ENCODE measurements at regions of chr11 and their contacts with region 1.

Region 1: DNA sequence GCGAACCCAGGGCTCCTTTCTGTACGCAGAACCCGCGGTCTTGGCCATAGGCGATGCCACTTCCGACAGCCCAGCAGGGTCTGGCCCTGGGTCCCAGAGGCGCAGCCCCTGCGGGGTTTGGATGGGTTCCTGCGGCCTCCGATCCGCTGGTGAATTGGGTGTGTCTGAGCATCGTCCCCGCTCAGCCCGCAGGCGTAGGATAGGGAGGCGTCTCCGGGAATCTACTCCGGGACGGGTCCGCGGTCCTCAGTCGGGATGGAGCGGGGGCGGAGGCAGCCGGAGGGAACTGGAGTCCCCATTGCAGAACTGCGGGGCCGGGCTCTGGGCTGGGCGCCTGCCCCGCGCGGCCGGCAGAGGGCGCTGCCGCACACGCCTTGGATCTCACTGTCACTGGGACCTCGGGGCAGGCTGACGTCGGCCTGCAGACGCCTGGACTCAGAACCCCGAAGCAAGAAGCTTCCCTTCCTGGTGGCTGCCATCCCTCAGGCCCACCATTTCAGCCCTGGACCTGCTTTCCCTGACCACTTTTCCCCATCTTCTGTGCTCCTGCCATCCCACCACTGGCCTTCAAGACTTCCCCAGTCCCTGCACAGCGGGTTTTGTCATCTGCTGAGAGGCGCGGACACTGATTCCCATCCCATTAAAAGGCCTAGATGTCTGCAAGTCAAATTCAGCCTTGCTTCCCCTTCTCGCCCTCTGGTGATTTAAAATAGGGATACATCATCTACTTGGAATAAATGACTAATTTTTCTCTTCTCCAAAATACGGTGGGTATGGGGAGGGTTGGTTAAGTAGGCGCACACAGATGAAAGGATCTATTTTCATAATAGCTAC is 38.3 kb upstream of the CREB3L1 start:
- DNase-seq: peak; percentile 71 to 92 (median 82)
- H3K4me3 ChIP-seq: peak overlapping the region in 58 of 59 donors; percentile 35 to 75 (median 59)
- H3K27ac ChIP-seq: peak overlapping the region in 56 of 59 donors; percentile 12 to 91 (median 80)
- H3K27me3 ChIP-seq: peaks cover 0 to 14% (median 0%) of the 10 kb centered on the region in 45 donors
- CTCF ChIP-seq: peak; percentile 84 to 100 (median 99)

Region 2: GRCh38 chr11:46121724-46122477 is 117.3 kb before region 1 on chr11:
- intact Hi-C with region 1: loop called (anchors 1 to 2 kb)
- DNase-seq: peak; percentile 55 to 79 (median 71)
- H3K4me3 ChIP-seq: peak overlapping the region; percentile 59 to 89 (median 76)
- H3K27ac ChIP-seq: peak overlapping the region; percentile 79 to 99 (median 94)
- H3K27me3 ChIP-seq: no peaks in the 10 kb centered on the region
- CTCF ChIP-seq: peak in 4 of 56 donors; percentile 5 to 19 (median 15)

Region 3: GRCh38 chr11:46278387-46279125 is 39.4 kb after region 1 on chr11:
- intact Hi-C with region 1: no loop called
- DNase-seq: peak in 3 of 10 donors; percentile 31 to 54 (median 46)
- H3K4me3 ChIP-seq: peak overlapping the region in 57 of 59 donors; percentile 14 to 69 (median 51)
- H3K27ac ChIP-seq: peak overlapping the region in 3 of 59 donors; percentile 10 to 58 (median 58)
- H3K27me3 ChIP-seq: peaks cover 0 to 78% (median 27%) of the 10 kb centered on the region in 45 donors
- CTCF ChIP-seq: peak in 41 of 56 donors; percentile 14 to 53 (median 33)

Region 4: DNA sequence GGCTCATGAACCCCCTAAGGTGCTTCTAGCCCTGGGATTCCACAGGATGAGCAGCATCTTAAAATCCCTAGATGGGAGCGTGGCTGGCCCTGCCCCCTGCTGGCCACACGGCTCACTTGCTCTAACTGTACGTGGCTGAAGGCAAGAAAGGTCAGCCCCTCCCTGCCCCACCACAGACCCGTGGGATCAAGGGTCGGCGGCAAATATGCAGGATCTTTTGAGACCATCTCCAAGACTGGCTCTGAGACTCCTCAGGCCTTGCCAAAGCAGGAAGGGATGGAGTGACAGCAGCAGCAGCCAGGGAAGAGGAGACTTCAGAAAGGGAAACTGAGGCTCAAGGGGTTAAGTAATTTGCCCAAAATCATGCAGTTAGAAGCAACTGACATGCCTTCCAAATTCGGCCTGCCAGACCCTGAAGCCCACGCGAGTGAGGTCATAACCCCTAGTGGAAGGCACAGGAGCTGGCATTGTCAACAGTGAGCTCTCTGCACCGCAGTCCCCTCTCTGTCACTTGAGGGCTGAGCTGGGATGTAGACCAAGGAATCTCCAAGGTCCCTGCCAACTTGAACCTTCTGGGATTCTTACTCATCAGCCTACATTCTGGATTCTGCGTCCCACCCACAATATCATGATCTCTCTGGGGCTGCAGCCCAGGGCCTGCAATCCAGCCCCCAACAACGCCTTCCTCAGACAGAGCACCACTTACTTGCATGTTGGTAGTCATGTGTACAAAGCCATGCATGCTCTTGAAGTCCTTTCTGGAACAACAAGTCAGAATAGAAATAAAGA is 69.6 kb after region 1 on chr11:
- intact Hi-C with region 1: loop called (anchors 1 to 2 kb)
- DNase-seq: peak; percentile 34 to 87 (median 78)
- H3K4me3 ChIP-seq: no peak overlapping the region
- H3K27ac ChIP-seq: no peak overlapping the region
- H3K27me3 ChIP-seq: no peaks in the 10 kb centered on the region
- CTCF ChIP-seq: peak; percentile 52 to 94 (median 87)

Region 5: GRCh38 chr11:46346886-46347636 is 107.9 kb after region 1 on chr11 and contains the start of gene DGKZ:
- intact Hi-C with region 1: loop called in 1 of 2 experiments (anchors 5 kb)
- DNase-seq: peak; percentile 78 to 95 (median 88)
- H3K4me3 ChIP-seq: peak within 1 kb of the TSS; percentile 42 to 90 (median 79)
- H3K27ac ChIP-seq: peak within 1 kb of the TSS in 56 of 59 donors; percentile 15 to 91 (median 82)
- H3K27me3 ChIP-seq: no peaks in the 10 kb centered on the region
- CTCF ChIP-seq: peak; percentile 31 to 92 (median 71)
- total RNA-seq, gene DGKZ: 142 to 475 (median 319) TPM

Region 6: GRCh38 chr11:46367244-46367915 is 128.2 kb after region 1 on chr11:
- intact Hi-C with region 1: loop called in 1 of 2 experiments (anchors 5 kb)
- DNase-seq: peak in 9 of 10 donors; percentile 61 to 87 (median 77)
- H3K4me3 ChIP-seq: peak overlapping the region in 26 of 59 donors; percentile 1 to 65 (median 22)
- H3K27ac ChIP-seq: peak overlapping the region in 58 of 59 donors; percentile 20 to 99 (median 96)
- H3K27me3 ChIP-seq: no peaks in the 10 kb centered on the region
- CTCF ChIP-seq: peak; percentile 84 to 99 (median 96)

Region 7: DNA sequence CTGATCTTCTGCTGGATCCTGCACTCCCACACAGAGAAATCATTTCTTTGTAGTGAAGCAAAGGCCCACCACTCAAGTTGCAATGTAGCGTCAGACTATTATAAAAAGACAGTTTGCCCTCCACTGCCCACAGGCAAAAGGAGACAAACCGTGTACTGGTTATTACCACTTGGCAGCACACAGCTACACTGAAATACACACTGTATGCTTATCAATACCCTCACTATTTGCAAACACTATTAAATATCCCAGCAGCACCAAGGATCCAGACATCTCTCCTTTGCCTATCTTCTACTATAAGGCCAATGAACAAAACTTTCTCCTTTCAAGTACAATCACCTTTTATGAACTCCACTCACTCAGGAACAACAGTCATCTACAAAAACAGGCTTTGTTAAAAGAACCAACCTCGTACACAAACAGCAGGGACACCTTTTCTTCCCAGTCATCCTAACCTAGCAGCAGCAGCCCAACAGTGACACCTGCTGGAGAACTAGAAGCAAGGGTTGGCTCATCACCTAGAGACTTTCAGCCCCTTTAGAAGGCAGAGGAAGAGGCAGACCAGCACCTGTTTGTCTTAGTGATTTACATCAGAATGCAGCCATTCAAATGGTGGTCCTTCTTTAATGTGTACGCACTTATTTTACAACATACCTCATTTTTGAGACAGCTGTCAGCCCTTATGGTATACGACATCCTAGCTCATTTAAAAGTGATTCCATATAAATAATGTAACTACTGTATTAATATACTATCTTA is 298.5 kb after region 1 on chr11:
- intact Hi-C with region 1: loop called in 1 of 2 experiments (anchors 10 kb)
- DNase-seq: peak in 8 of 10 donors; percentile 41 to 78 (median 58)
- H3K4me3 ChIP-seq: no peak overlapping the region
- H3K27ac ChIP-seq: peak overlapping the region in 16 of 59 donors; percentile 2 to 53 (median 24)
- H3K27me3 ChIP-seq: no peaks in the 10 kb centered on the region
- CTCF ChIP-seq: peak; percentile 72 to 94 (median 89)

Measured in dorsolateral prefrontal cortex (tissue), 120 donors.